Activated CD4-positive, alpha-beta memory T cell treated with anti-CD3 and anti-CD28 coated beads for 36 hours (primary cell): ENCODE measurements at regions of chr4 and their contacts with region 1.

Region 1: DNA sequence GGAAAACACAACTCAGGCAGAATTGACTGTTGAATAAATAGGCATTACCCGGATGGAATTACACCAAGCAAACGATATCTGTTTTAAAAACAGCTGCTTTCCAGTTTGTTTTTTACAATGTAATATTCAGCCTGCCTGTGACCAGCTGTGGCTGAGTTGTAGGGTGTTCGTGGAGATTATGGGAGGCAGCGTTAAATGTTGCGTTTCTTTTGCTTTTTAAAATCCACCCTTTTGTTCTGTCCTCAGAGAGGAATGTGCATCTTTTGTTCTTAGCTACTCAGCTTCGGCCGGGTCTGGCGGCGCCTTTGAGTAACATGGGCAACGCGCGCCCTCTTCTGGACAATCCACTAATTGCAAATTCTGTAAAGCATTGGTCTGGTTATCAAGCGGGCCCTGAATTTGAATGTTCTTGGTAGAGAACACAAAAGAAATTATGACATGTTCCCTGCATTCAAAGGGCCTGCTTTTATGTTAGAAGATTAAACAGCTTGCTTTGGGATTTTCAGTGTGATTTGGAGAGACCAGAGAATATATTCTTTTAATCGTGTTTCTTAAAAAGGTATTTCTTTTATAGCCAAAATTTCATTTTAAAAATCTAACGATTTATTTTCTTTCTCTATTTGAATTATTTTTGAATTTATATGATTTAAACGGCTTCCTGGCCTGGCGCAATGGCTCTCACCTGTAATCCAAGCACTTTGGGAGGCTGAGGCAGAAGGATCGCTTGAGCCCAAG is 76.3 kb upstream of the TRIM2 start:
- DNase-seq: peak; percentile 89
- H3K4me3 Mint-ChIP-seq: no peak overlapping the region
- H3K27ac Mint-ChIP-seq: no peak overlapping the region
- H3K4me1 Mint-ChIP-seq: peaks cover 5% of the 10 kb centered on the region
- H3K27me3 Mint-ChIP-seq: peaks cover 1% of the 10 kb centered on the region

Region 2: DNA sequence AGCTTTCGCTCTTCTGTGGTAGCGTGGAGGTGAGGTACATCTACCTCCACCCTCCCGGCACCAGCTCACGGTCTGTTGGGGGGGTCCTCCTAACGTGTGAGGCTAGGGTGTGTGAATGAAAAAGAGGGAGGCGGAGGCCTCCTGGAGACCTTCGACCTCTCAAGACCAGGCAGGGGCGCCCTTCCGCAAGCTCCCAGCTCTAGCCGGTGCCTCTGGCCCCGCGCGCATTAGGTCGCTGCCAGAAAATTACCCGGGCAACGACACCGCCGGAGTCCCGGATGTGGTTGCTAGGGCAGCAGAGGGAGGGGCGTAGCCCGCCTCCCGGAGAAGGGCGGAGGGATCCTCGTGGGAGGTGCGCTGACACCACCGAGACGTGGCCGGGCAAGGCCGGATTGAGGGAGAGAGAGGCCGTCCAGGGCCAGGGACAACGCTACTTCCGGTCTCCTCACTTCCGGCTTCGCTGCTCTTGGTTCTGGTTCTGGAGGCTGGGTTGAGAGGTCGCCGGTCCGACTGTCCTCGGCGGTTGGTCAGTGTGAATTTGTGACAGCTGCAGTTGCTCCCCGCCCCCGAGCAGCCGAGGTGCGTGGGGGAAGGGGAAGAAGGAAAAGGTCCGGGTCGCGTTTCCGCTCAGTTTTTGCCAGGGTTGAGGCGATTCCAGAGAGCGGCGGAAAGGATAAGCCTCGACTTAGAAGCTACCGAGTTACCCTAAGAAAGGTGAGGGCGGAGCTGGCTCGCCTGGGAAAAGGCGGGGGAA is 348.2 kb before region 1 on chr4 and contains the starts of genes ARFIP1 and TIGD4:
- CTCF ChIA-PET with region 1: interaction called, 14 read pairs
- POLR2A ChIA-PET with region 1: no interaction called
- intact Hi-C with region 1: no loop called
- DNase-seq: peak; percentile 98
- H3K4me3 Mint-ChIP-seq: peak within 1 kb of the TSS; percentile 95
- H3K27ac Mint-ChIP-seq: peak within 1 kb of the TSS; percentile 85
- H3K4me1 Mint-ChIP-seq: peaks cover 34% of the 10 kb centered on the region
- H3K27me3 Mint-ChIP-seq: peaks cover 3% of the 10 kb centered on the region
- total RNA-seq, gene ARFIP1: 9.3 to 10.5 TPM
- total RNA-seq, gene TIGD4: 0.15 to 0.31 TPM

Region 3: GRCh38 chr4:152850377-152850776 is 277.6 kb before region 1 on chr4:
- CTCF ChIA-PET with region 1: interaction called, 68 read pairs
- POLR2A ChIA-PET with region 1: no interaction called
- intact Hi-C with region 1: loop called (anchors 1 kb)
- DNase-seq: peak; percentile 64
- H3K4me3 Mint-ChIP-seq: no peak overlapping the region
- H3K27ac Mint-ChIP-seq: no peak overlapping the region
- H3K4me1 Mint-ChIP-seq: peaks cover 15% of the 10 kb centered on the region
- H3K27me3 Mint-ChIP-seq: no peaks in the 10 kb centered on the region

Region 4: GRCh38 chr4:153074936-153075630 is 52.8 kb before region 1 on chr4:
- CTCF ChIA-PET with region 1: interaction called, 500 read pairs
- POLR2A ChIA-PET with region 1: interaction called, 3 read pairs
- intact Hi-C with region 1: no loop called
- DNase-seq: no peak
- H3K4me3 Mint-ChIP-seq: no peak overlapping the region
- H3K27ac Mint-ChIP-seq: no peak overlapping the region
- H3K4me1 Mint-ChIP-seq: peaks cover 9% of the 10 kb centered on the region
- H3K27me3 Mint-ChIP-seq: no peaks in the 10 kb centered on the region

Region 5: DNA sequence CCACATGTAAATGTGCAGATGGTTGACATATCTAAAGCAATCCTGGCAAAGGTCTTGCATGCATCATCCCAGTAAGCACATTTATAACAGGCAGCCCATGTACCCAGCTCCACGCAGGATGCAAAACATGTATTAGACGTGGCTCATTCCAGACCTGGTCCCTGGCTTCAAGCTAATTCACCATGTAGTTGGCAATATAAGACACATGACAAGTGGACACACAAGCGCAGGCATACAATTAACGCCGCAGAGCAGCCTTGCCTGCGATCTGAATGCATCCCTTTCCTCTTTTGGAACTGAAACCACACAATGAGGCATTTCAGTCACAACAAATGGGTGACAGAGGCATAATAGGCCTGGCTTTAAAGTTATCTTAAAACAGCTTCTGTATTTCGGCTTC is 38.2 kb before region 1 on chr4:
- CTCF ChIA-PET with region 1: interaction called, 500 read pairs
- POLR2A ChIA-PET with region 1: no interaction called
- intact Hi-C with region 1: no loop called
- DNase-seq: no peak
- H3K4me3 Mint-ChIP-seq: no peak overlapping the region
- H3K27ac Mint-ChIP-seq: no peak overlapping the region
- H3K4me1 Mint-ChIP-seq: peaks cover 15% of the 10 kb centered on the region
- H3K27me3 Mint-ChIP-seq: no peaks in the 10 kb centered on the region

Region 6: GRCh38 chr4:153107246-153107645 is 20.7 kb before region 1 on chr4:
- CTCF ChIA-PET with region 1: interaction called, 50 read pairs
- POLR2A ChIA-PET with region 1: no interaction called
- intact Hi-C with region 1: no loop called
- DNase-seq: no peak
- H3K4me3 Mint-ChIP-seq: no peak overlapping the region
- H3K27ac Mint-ChIP-seq: no peak overlapping the region
- H3K4me1 Mint-ChIP-seq: peaks cover 2% of the 10 kb centered on the region
- H3K27me3 Mint-ChIP-seq: no peaks in the 10 kb centered on the region

Region 7: DNA sequence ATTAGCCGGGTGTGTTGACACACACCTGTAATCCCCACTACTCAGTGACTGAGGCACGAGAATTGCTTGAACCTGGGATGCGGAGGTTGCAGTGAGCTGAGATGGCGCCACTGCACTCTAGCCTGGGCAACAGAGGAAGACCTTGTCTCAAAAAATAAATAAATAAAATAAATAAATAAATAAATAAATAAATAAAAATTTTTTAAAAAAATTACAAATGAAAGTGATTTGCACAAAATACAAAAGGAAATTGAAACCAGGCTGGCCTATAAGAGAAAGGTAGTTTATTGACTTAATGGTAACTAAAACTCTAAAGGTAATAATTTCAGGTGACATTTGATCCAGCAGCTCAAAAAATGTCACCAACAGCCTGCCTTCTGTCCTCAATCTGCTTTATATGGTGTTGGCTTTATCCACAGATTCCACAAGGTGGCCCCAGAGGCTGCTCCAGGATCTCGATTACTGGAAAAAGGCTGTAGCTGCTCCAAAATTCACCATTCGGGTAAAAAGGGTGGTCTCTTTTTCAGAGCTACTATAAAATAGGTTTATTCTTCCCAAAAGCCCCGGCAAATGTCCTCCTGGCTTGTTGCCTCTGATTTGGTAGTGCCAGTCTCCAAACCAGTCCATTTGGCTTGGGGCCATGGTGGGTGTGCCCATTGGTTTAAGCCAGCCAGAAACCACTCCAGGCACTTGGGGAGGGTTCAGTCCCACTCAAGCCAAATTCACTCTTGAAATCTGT is 14.9 kb after region 1 on chr4:
- CTCF ChIA-PET with region 1: interaction called, 14 read pairs
- POLR2A ChIA-PET with region 1: no interaction called
- intact Hi-C with region 1: no loop called
- DNase-seq: peak; percentile 75
- H3K4me3 Mint-ChIP-seq: no peak overlapping the region
- H3K27ac Mint-ChIP-seq: no peak overlapping the region
- H3K4me1 Mint-ChIP-seq: peaks cover 10% of the 10 kb centered on the region
- H3K27me3 Mint-ChIP-seq: no peaks in the 10 kb centered on the region